ENCODE measurements at regions of chr5 and their contacts with region 1.

Region 1: GRCh38 chr5:41924872-41925554 is at the start of gene FBXO4:
- DNase-seq: peak; percentile 94
- ATAC-seq: peak; percentile 99
- total RNA-seq, gene FBXO4: 3.6 TPM

Region 2: DNA sequence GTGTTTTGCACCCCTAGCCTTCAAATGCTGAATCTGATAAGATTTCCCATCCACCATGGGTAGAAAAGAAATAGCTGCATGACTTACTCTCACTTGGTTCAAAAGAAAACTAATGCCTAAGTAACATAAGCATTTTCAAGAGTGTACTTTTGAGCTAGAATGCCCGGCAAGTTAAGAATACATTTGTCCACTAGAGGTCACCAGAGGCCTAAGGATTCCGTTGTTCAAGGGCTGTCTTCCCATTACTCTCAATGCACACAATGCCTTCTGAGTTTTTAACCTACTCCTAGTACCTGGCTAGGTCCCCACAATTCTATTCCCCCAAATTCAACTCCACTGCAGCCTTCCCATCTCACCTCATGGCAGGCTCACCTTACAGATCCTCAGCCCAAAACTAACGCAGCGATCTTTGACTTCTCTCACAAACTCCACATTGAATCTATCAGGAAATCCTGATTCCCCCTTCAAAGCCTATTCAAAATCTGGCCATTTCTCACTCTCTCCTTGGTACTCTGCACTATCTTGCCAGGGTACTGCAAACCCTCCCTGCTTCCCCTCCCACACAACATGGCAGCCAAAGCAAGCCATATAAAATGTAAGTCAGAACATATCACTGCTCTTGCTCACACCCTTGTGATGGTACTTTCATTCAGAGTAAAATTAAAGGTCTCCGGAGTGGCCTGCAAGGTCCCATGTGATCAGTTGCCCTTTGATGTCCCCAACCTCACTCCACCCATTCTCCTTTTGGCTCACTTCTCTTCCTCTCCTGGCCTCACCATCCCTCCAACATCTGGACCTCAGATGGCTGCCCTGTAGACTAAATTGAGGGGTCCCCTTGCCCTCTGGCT is 68.1 kb before region 1 on chr5:
- intact Hi-C with region 1: loop called (anchors 2 kb)
- DNase-seq: no peak
- ATAC-seq: peak; percentile 75

Region 3: GRCh38 chr5:41903892-41904799 is 20.9 kb before region 1 on chr5 and contains the start of gene RIMOC1:
- intact Hi-C with region 1: loop called (anchors 2 kb)
- DNase-seq: peak; percentile 99
- ATAC-seq: peak; percentile 99
- total RNA-seq, gene RIMOC1: 12.9 TPM

Region 4: GRCh38 chr5:42015681-42016080 is 90.7 kb after region 1 on chr5:
- intact Hi-C with region 1: no loop called
- DNase-seq: no peak
- ATAC-seq: no peak

Region 5: GRCh38 chr5:42591015-42591414 is 666.0 kb after region 1 on chr5:
- intact Hi-C with region 1: loop called (anchors 10 kb)
- DNase-seq: peak; percentile 80
- ATAC-seq: peak; percentile 87